Psoas muscle (tissue), 8 donors: ENCODE measurements at regions of chr17 and their contacts with region 1.

Region 1: DNA sequence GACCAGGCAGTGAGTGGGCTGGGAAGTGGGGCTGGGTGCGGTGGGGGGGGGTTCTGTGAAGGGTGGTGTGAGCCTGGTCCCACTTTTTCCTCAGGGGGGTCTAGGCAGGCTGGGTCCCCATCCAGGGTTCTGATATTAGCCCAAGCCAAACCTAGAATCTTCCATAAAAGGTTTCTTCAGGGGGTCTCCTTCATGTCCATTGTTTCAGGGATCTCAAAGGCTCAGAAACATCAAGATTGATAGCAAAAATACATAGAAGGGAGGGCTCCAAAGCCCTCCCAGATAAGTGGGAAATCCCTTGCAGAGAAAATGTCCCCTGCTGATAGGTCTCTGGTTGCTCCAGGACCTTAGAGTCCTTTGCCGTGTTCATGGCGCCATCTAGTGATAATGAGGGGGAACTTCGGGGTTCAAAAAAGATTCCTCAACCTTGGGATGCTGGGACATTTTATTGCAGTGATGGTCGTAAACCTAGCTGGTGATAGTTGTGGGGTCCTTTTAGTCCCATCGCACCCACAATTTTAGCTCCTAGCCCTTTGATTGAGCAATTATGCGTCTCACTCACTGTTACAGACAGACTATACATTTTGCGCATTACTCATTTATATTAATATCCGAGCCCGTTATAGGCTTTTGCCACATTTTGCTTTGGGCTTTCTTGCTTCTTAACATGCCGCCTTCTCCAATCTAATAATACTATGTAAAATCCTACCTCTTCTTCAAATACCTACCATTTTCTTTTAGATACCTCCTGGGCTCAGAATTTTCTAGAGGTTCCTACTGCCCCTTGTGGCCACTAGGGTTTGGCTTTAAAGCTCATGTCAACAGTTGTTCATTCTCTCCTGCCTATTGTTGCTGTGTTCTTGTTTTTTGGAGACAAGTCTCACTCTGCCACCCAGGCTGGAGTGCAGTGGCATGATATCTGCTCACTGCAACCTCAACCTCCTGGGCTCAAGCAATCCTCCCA is 35.1 kb downstream of the IGF2BP1 start:
- DNase-seq: no peak
- ATAC-seq: peak; percentile 58 to 74 (median 65)
- H3K4me3 ChIP-seq: no peak overlapping the region
- H3K27ac ChIP-seq: no peak overlapping the region
- H3K4me1 ChIP-seq: peaks cover 5% of the 10 kb centered on the region
- H3K27me3 ChIP-seq: peaks cover 0 to 36% (median 4%) of the 10 kb centered on the region in 3 donors
- CTCF ChIP-seq: peak; percentile 70

Region 2: GRCh38 chr17:47698749-47699535 is 1333.3 kb before region 1 on chr17:
- intact Hi-C with region 1: no loop called
- DNase-seq: peak; percentile 51 to 78
- ATAC-seq: peak in 3 of 4 donors; percentile 26 to 35 (median 29)
- H3K4me3 ChIP-seq: no peak overlapping the region
- H3K27ac ChIP-seq: no peak overlapping the region
- H3K4me1 ChIP-seq: peaks cover 4% of the 10 kb centered on the region
- H3K27me3 ChIP-seq: no peaks in the 10 kb centered on the region
- CTCF ChIP-seq: peak; percentile 93

Region 3: GRCh38 chr17:48678141-48678971 is 353.9 kb before region 1 on chr17:
- intact Hi-C with region 1: loop called (anchors 5 to 10 kb)
- DNase-seq: peak; percentile 58 to 76
- ATAC-seq: peak; percentile 79 to 93 (median 83)
- H3K4me3 ChIP-seq: no peak overlapping the region
- H3K27ac ChIP-seq: no peak overlapping the region
- H3K4me1 ChIP-seq: no peaks in the 10 kb centered on the region
- H3K27me3 ChIP-seq: peaks cover 0 to 44% (median 5%) of the 10 kb centered on the region in 3 donors
- CTCF ChIP-seq: peak; percentile 88

Region 4: DNA sequence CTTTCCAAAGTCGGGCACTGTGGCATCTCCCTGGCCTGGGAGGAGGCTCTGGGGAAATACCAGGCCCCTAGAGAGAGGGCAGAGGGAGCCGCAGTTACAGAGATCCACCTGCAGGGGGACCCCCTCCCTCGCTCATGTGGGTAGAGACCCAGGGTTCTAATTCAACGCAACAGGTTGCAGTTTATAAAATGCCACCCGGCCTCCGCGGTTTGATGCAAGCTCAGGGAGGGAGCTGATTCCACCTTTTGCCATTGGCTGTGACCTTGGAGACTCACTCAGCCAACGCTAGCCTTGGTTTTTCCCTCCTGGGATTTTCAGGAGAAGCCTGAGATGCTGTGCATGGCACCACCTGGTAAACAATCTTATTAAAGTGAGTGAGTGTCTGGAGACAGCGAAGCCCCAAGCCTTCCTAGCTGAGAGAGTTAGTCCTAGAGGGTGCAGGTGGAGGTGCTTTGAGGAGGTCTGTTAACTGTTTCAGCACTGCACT is 227.3 kb before region 1 on chr17:
- intact Hi-C with region 1: loop called (anchors 5 to 10 kb)
- DNase-seq: peak; percentile 55 to 75
- ATAC-seq: peak; percentile 67 to 87 (median 82)
- H3K4me3 ChIP-seq: no peak overlapping the region
- H3K27ac ChIP-seq: no peak overlapping the region
- H3K4me1 ChIP-seq: no peaks in the 10 kb centered on the region
- H3K27me3 ChIP-seq: no peaks in the 10 kb centered on the region
- CTCF ChIP-seq: peak; percentile 88

Region 5: GRCh38 chr17:48816774-48817590 is 215.3 kb before region 1 on chr17 and contains the start of gene TTLL6:
- intact Hi-C with region 1: loop called in 1 of 2 experiments (anchors 5 kb)
- DNase-seq: peak; percentile 74 to 82
- ATAC-seq: peak; percentile 71 to 93 (median 88)
- H3K4me3 ChIP-seq: peak within 1 kb of the TSS; percentile 59
- H3K27ac ChIP-seq: no peak within 1 kb of the TSS
- H3K4me1 ChIP-seq: no peaks in the 10 kb centered on the region
- H3K27me3 ChIP-seq: peaks cover 0 to 71% (median 6%) of the 10 kb centered on the region in 3 donors
- CTCF ChIP-seq: no peak
- total RNA-seq, gene TTLL6: not detected

Region 6: DNA sequence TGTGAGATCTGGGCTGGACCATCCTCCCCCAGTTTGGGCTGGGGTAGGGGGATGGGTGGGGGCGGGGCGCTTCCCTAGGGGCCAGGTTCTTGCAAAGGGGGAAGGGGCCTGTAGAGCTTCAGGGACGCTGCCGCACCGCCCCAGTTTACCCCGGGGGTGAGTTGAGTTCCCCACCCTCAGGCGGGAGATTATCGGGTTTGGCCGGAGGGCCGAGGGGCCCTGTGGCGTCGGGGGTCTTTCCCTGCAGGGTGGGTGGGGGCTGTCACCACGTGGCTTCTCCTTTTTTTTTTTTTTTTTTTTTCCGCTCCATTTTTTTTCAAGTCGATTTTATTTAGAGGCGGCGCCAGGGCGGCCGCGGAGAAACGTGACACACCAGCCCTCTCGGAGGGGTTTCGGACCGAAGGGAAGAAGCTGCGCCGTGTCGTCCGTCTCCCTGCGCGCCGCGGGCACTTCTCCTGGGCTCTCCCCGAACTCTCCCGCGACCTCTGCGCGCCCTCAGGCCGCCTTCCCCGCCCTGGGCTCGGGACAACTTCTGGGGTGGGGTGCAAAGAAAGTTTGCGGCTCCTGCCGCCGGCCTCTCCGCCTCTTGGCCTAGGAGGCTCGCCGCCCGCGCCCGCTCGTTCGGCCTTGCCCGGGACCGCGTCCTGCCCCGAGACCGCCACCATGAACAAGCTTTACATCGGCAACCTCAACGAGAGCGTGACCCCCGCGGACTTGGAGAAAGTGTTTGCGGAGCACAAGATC is 35.0 kb before region 1 on chr17 and contains the start of gene IGF2BP1:
- intact Hi-C with region 1: no loop called
- DNase-seq: no peak
- ATAC-seq: peak in 2 of 4 donors; percentile 25 to 45
- H3K4me3 ChIP-seq: peak within 1 kb of the TSS; percentile 40
- H3K27ac ChIP-seq: no peak within 1 kb of the TSS
- H3K4me1 ChIP-seq: peaks cover 4% of the 10 kb centered on the region
- H3K27me3 ChIP-seq: peaks cover 5 to 99% (median 40%) of the 10 kb centered on the region in 3 donors
- CTCF ChIP-seq: no peak
- total RNA-seq, gene IGF2BP1: not detected